ENCODE measurements at regions of chr3 and their contacts with region 1.

Region 1: GRCh38 chr3:129160891-129161859 is at the start of gene ISY1:
- DNase-seq: peak; percentile 88
- H3K4me3 Mint-ChIP-seq: peak within 1 kb of the TSS; percentile 97
- H3K27ac Mint-ChIP-seq: peak within 1 kb of the TSS; percentile 99
- H3K4me1 Mint-ChIP-seq: peaks cover 34% of the 10 kb centered on the region
- H3K27me3 Mint-ChIP-seq: no peaks in the 10 kb centered on the region
- total RNA-seq, gene ISY1: 72.3 and 75.4 TPM in 2 replicates

Region 2: GRCh38 chr3:128969993-128970739 is 191.0 kb before region 1 on chr3:
- intact Hi-C with region 1: loop called (anchors 1 kb)
- DNase-seq: peak; percentile 52
- H3K4me3 Mint-ChIP-seq: no peak overlapping the region
- H3K27ac Mint-ChIP-seq: no peak overlapping the region
- H3K4me1 Mint-ChIP-seq: peaks cover 10% of the 10 kb centered on the region
- H3K27me3 Mint-ChIP-seq: peaks cover 9% of the 10 kb centered on the region

Region 3: DNA sequence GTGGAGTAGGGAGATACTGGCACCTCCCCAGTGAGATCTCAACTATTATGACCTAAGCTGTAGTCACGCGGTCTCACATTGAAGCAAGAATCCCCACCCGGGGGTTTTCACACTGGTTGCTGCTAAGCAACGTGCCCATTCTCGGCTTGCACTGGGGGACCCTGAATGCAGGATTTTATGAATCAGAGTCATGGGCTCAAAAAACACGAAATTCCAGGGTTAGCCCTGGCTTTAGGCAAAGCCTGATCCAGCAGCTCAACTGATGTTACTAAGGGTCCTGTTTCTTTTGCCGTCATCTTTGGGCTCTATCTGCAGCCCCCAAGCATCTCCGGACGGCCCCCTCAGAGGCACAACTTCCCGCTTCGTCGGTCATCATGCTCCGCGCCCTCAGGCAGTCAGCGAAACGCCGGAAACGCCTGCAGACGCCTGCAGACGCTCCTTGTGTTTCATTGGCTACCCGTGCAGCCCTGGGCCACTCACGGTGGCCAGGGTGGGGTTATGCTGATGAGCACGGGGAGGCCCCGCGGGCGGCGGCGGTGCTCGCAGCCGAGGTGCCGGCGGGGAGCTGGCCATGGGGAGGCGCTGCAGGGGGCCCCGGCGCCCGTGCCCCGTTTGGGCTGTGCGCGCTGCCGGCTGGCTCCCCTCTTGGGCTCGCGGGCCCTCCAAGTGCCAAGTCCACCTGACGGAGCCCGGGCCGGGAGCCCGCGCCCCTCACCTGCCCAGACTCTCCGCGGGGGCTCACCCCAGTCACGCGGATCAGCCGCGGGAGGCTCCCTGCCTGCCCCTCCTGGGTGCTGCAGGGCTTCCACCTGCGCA is 134.2 kb before region 1 on chr3:
- intact Hi-C with region 1: loop called (anchors 1 kb)
- DNase-seq: peak; percentile 93
- H3K4me3 Mint-ChIP-seq: peak overlapping the region; percentile 80
- H3K27ac Mint-ChIP-seq: peak overlapping the region; percentile 87
- H3K4me1 Mint-ChIP-seq: peaks cover 24% of the 10 kb centered on the region
- H3K27me3 Mint-ChIP-seq: peaks cover 13% of the 10 kb centered on the region

Region 4: DNA sequence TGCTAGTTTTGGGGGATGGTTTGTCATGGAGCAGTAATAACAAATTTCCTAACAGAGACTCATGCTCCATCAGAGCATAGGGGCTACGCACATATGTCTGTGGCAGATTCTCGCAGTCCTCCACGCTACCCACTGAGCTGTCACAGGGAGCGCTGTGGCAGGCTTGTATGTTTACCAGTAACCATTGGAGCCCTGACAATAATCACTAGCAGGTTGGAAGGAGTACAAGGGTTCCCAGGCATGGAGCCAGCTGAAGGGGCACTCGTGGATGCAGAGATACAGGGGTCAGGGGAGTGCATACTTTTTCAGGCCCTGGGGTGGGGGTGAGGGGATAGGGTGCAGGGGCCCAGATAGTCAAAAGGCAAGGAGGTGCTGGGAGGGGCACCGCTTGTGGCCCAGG is 108.5 kb before region 1 on chr3:
- intact Hi-C with region 1: loop called (anchors 1 kb)
- DNase-seq: no peak
- H3K4me3 Mint-ChIP-seq: no peak overlapping the region
- H3K27ac Mint-ChIP-seq: no peak overlapping the region
- H3K4me1 Mint-ChIP-seq: peaks cover 9% of the 10 kb centered on the region
- H3K27me3 Mint-ChIP-seq: peaks cover 14% of the 10 kb centered on the region

Region 5: DNA sequence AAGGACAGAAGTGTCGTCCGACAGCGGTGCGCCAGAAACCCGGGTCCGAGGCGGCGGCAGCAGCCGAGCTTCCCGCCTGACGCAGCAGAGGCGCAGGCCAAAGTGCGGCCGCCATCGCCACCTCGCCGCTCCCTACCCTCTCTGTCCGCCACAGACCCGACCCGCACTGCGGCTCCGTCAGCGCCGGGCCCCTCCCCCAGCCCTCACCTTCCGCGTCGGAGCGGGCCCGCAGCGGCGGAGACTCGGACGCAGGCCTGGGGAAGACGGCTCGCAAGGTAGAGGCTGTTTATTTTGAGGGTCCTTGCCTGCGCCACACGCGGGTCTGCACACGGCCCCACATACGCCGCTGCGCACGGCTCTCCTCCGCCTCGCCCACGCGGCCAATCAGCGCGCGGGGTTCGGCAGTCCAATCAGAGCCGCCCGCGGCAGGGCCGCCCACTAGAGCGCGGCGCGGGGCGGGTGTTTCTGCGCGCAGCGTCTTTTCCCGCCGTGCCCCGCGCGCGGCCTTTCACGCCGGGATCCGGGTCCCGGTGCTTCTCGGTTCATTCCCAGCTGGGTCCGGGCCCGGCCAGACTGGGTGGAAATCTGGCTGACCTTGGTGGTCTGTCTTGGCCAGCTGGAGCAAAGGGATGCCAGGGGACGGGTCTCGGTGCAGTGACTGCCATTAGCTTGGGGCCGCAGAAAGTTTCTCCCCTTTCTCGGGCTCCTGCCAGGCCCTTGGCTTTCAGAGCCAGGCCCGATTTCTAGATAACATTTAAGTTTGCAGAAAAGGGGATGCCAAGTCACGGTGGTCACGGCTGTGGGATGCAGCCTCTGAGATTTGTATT is 22.6 kb after region 1 on chr3 and contains the start of gene CNBP:
- intact Hi-C with region 1: loop called (anchors 1 kb)
- DNase-seq: peak; percentile 91
- H3K4me3 Mint-ChIP-seq: peak within 1 kb of the TSS; percentile 97
- H3K27ac Mint-ChIP-seq: peak within 1 kb of the TSS; percentile 98
- H3K4me1 Mint-ChIP-seq: peaks cover 35% of the 10 kb centered on the region
- H3K27me3 Mint-ChIP-seq: no peaks in the 10 kb centered on the region
- total RNA-seq, gene CNBP: 408 and 425 TPM in 2 replicates

Region 6: DNA sequence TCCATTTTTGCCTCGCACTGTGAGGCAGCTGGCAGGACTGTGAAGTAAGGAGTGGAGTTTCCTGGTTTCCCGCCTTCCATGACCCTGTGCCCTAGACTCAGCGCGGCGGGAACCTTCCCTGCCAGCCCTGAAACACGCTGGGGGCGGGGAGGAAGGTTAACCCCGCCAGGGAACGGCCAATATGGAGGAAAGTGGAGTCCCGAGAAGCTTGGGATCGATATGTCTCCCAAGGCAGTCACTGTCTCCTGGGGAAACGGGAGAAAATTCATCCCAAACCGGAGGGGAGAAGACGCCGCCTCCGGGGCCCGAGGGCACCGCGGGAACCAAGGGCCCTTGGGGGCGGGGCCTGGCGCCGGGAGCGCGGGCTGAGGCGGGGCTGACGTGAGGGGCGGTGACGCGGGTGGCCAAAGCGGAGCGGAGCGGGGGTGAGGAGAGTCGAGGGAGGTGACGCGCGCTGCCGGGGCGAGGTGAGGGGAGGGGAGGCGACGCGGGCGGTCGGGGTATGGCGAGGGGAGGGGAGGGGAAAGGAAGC is 117.3 kb after region 1 on chr3 and contains the start of gene HMCES:
- intact Hi-C with region 1: loop called (anchors 1 kb)
- DNase-seq: peak; percentile 92
- H3K4me3 Mint-ChIP-seq: peak within 1 kb of the TSS; percentile 93
- H3K27ac Mint-ChIP-seq: peak within 1 kb of the TSS; percentile 97
- H3K4me1 Mint-ChIP-seq: peaks cover 48% of the 10 kb centered on the region
- H3K27me3 Mint-ChIP-seq: no peaks in the 10 kb centered on the region
- total RNA-seq, gene HMCES: 59.4 and 61.6 TPM in 2 replicates

Measured in activated T-helper 1 cell treated with anti-CD3 and anti-CD28 coated beads, Interleukin-12 subunit alpha, Interleukin-12 subunit beta, Interleukin-2, Interleukin-4 antibody, amounts not matched to agents 30 ng/mL and 10 ng/mL and 1 ng/mL, durations not matched to agents 14 hours and 24 hours and 36 hours (primary cell).